Mammary epithelial cell (primary cell): ENCODE measurements at regions of chr12 and their contacts with region 1.

Region 1: GRCh38 chr12:22334410-22335290 is at the start of gene ST8SIA1:
- DNase-seq: peak; percentile 34
- H3K4me3 ChIP-seq: peak within 1 kb of the TSS; percentile 67 to 83 (median 79)
- H3K27ac ChIP-seq: peak within 1 kb of the TSS; percentile 47
- H3K4me1 ChIP-seq: peaks cover 15% of the 10 kb centered on the region
- H3K27me3 ChIP-seq: peaks cover 5% of the 10 kb centered on the region
- CTCF ChIP-seq: no peak
- total RNA-seq, gene ST8SIA1: 0.50 to 0.87 TPM

Region 2: DNA sequence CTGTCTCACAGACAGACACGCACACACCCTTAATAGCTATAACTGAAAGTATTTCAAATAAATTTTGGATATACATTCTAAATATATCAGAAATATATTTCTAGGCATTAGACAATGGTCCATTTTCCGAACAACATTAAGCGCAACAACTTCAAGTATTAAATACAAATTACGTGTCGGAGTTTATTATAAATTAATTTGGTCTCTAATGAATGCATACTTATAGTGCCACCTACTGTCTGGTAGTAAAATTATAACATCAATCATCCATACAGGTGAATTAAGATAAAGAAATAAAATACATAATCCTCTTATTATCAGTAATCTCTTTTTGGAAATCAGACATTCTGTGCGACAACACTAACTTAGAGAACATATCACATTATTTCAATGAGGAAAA is 315.8 kb before region 1 on chr12:
- CTCF ChIA-PET with region 1: no interaction called
- dilution Hi-C with region 1: no loop called
- in situ Hi-C with region 1: no loop called
- intact Hi-C with region 1: no loop called
- DNase-seq: no peak
- H3K4me3 ChIP-seq: no peak overlapping the region
- H3K27ac ChIP-seq: no peak overlapping the region
- H3K4me1 ChIP-seq: no peaks in the 10 kb centered on the region
- H3K27me3 ChIP-seq: no peaks in the 10 kb centered on the region
- CTCF ChIP-seq: peak; percentile 33 to 53

Region 3: GRCh38 chr12:22083167-22083566 is 251.5 kb before region 1 on chr12:
- CTCF ChIA-PET with region 1: no interaction called
- dilution Hi-C with region 1: no loop called
- in situ Hi-C with region 1: no loop called
- intact Hi-C with region 1: loop called (anchors 1 kb)
- DNase-seq: peak; percentile 30
- H3K4me3 ChIP-seq: no peak overlapping the region
- H3K27ac ChIP-seq: no peak overlapping the region
- H3K4me1 ChIP-seq: no peaks in the 10 kb centered on the region
- H3K27me3 ChIP-seq: no peaks in the 10 kb centered on the region
- CTCF ChIP-seq: peak in 1 of 2 donors; percentile 57

Region 4: GRCh38 chr12:22190969-22191368 is 143.7 kb before region 1 on chr12:
- CTCF ChIA-PET with region 1: interaction called, 3 read pairs
- dilution Hi-C with region 1: no loop called
- in situ Hi-C with region 1: no loop called
- intact Hi-C with region 1: loop called (anchors 1 kb)
- DNase-seq: no peak
- H3K4me3 ChIP-seq: no peak overlapping the region
- H3K27ac ChIP-seq: no peak overlapping the region
- H3K4me1 ChIP-seq: no peaks in the 10 kb centered on the region
- H3K27me3 ChIP-seq: no peaks in the 10 kb centered on the region
- CTCF ChIP-seq: peak in 1 of 2 donors; percentile 22

Region 5: GRCh38 chr12:22231836-22232235 is 102.8 kb before region 1 on chr12:
- CTCF ChIA-PET with region 1: interaction called, 3 read pairs
- dilution Hi-C with region 1: no loop called
- in situ Hi-C with region 1: no loop called
- intact Hi-C with region 1: loop called (anchors 1 kb)
- DNase-seq: no peak
- H3K4me3 ChIP-seq: no peak overlapping the region
- H3K27ac ChIP-seq: no peak overlapping the region
- H3K4me1 ChIP-seq: peaks cover 2% of the 10 kb centered on the region
- H3K27me3 ChIP-seq: no peaks in the 10 kb centered on the region
- CTCF ChIP-seq: peak; percentile 8 to 27

Region 6: DNA sequence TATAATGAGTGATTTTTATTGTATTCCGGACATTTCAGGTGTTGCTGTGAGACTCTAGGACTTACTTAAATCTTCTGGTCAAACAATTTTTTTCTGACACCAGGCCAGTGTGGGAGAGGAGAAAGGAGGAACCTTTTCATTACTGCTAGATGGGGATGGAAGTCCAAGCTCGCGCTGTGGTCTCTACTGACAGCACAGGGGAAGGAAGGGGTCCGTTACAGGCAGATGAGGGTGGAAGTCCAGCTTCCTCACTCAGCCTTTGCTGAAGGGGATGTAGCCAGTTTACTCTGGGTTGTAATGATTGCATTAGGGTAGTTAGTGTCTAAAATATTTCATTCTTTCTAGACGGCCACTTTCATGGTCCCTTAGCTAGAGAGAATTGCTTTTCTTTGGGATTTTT is 26.1 kb after region 1 on chr12:
- CTCF ChIA-PET with region 1: no interaction called
- dilution Hi-C with region 1: no loop called
- in situ Hi-C with region 1: no loop called
- intact Hi-C with region 1: no loop called
- DNase-seq: no peak
- H3K4me3 ChIP-seq: no peak overlapping the region
- H3K27ac ChIP-seq: no peak overlapping the region
- H3K4me1 ChIP-seq: no peaks in the 10 kb centered on the region
- H3K27me3 ChIP-seq: no peaks in the 10 kb centered on the region
- CTCF ChIP-seq: no peak

Region 7: DNA sequence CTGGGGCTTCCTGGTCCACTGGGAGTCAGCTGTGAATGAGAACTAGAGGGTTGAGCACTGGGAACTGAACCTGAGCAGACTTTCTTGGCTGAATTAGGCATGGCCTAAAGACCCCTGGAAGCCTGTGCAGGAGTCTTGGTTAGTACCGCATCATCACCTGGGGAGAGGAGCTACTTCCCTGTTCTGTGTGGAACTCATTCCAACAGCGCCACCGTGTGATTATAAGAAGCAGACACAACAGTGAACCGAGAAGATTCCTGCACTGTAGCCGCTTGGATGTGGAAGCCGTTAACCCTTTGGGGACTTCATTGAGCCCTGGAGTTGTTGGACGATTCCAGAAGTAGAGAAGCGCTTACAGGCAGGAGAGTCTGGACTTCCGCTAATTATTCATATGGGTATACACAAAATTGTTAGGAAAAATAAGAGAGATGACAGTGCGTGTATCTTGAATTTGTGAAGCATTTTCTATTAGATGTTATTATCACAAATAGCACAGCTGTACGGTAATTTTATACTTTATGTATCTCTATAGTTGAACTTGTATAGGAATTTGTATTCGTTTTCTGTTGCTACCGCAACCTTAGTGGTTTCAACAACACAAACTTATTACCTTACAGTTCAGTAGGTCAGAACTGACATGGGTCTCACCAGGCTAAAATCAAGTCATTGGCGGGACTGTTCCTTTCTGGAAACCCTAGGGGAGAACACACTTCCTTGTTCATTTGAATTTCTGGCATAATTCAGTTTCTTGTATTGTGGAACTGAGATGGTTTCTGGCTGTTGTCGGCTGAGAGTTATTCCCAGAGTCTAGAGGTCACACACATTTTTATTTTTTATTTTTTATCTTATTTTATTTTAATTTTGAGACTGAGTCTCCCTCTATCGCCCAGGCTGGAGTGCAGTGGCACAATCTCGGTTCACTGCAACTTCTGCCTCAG is 109.0 kb after region 1 on chr12:
- CTCF ChIA-PET with region 1: interaction called, 10 read pairs
- dilution Hi-C with region 1: no loop called
- in situ Hi-C with region 1: loop called (anchors 10 kb)
- intact Hi-C with region 1: loop called (anchors 1 kb)
- DNase-seq: peak; percentile 71
- H3K4me3 ChIP-seq: no peak overlapping the region
- H3K27ac ChIP-seq: no peak overlapping the region
- H3K4me1 ChIP-seq: no peaks in the 10 kb centered on the region
- H3K27me3 ChIP-seq: no peaks in the 10 kb centered on the region
- CTCF ChIP-seq: peak; percentile 81 to 84